ENCODE measurements at regions of chrX and their contacts with region 1.

Region 1: GRCh38 chrX:109384699-109385098 is 97.2 kb downstream of the GUCY2F start:
- DNase-seq: peak; percentile 28
- H3K4me3 Mint-ChIP-seq: no peak overlapping the region
- H3K27ac Mint-ChIP-seq: no peak overlapping the region
- H3K4me1 Mint-ChIP-seq: no peaks in the 10 kb centered on the region
- H3K27me3 Mint-ChIP-seq: peaks cover 13% of the 10 kb centered on the region
- CTCF ChIP-seq: peak; percentile 41

Region 2: DNA sequence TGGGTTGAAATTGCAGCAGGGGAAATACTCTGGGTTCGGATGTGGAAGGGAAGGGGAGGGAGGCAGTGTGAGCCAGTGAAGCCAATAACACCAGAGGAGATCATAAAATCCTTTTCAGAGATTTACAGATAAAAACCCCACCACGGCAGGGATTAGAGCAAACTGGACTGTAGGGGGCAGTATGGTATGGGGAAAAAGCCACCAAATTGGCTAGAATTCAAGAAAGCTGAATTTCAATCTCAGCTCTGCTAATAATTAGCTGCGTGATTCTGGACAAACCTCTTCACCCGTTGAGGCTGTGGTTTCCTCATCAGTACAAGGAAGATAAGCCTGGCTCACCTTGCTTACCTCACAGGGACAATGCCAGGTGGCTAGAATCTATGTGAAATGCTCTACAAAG is 1185.0 kb before region 1 on chrX:
- CTCF ChIA-PET with region 1: no interaction called
- intact Hi-C with region 1: loop called (anchors 10 kb)
- DNase-seq: peak; percentile 63
- H3K4me3 Mint-ChIP-seq: no peak overlapping the region
- H3K27ac Mint-ChIP-seq: no peak overlapping the region
- H3K4me1 Mint-ChIP-seq: no peaks in the 10 kb centered on the region
- H3K27me3 Mint-ChIP-seq: peaks cover 15% of the 10 kb centered on the region
- CTCF ChIP-seq: peak; percentile 29

Region 3: DNA sequence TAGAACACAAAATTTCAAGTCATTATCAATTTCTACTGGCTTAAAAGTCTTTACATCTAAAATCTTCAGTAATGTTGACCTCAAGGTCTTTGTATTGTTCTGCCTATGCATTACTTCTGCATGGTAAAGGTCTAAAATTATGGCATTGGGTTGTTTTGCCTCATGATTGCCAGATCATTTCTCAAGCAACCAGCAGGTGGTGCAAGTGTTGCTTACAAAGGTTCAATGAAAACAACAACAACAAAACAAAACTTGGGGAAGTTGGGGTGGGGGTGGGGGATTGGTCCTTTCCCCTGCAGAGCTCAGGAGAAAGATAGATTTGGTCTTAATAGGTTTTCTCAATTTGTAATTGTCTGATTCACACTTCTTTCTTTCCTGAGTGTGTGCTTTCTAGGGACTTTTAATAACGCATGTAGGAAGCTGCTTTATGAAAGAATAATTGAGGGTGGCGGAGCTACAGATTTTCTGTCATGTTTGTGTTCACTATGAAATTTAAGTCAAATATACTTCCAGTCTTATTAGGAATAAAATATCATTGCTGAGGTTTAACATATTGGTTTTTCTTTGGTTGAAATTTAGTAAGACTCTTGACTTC is 800.0 kb before region 1 on chrX:
- CTCF ChIA-PET with region 1: no interaction called
- intact Hi-C with region 1: loop called (anchors 10 kb)
- DNase-seq: peak; percentile 10
- H3K4me3 Mint-ChIP-seq: no peak overlapping the region
- H3K27ac Mint-ChIP-seq: no peak overlapping the region
- H3K4me1 Mint-ChIP-seq: no peaks in the 10 kb centered on the region
- H3K27me3 Mint-ChIP-seq: no peaks in the 10 kb centered on the region
- CTCF ChIP-seq: peak; percentile 34

Region 4: GRCh38 chrX:108699368-108699767 is 685.3 kb before region 1 on chrX:
- CTCF ChIA-PET with region 1: interaction called, 31 read pairs
- intact Hi-C with region 1: loop called (anchors 1 kb)
- DNase-seq: no peak
- H3K4me3 Mint-ChIP-seq: no peak overlapping the region
- H3K27ac Mint-ChIP-seq: no peak overlapping the region
- H3K4me1 Mint-ChIP-seq: no peaks in the 10 kb centered on the region
- H3K27me3 Mint-ChIP-seq: no peaks in the 10 kb centered on the region
- CTCF ChIP-seq: no peak

Region 5: GRCh38 chrX:109049902-109050301 is 334.8 kb before region 1 on chrX:
- CTCF ChIA-PET with region 1: no interaction called
- intact Hi-C with region 1: loop called (anchors 5 kb)
- DNase-seq: peak; percentile 6
- H3K4me3 Mint-ChIP-seq: no peak overlapping the region
- H3K27ac Mint-ChIP-seq: no peak overlapping the region
- H3K4me1 Mint-ChIP-seq: no peaks in the 10 kb centered on the region
- H3K27me3 Mint-ChIP-seq: no peaks in the 10 kb centered on the region
- CTCF ChIP-seq: no peak

Region 6: DNA sequence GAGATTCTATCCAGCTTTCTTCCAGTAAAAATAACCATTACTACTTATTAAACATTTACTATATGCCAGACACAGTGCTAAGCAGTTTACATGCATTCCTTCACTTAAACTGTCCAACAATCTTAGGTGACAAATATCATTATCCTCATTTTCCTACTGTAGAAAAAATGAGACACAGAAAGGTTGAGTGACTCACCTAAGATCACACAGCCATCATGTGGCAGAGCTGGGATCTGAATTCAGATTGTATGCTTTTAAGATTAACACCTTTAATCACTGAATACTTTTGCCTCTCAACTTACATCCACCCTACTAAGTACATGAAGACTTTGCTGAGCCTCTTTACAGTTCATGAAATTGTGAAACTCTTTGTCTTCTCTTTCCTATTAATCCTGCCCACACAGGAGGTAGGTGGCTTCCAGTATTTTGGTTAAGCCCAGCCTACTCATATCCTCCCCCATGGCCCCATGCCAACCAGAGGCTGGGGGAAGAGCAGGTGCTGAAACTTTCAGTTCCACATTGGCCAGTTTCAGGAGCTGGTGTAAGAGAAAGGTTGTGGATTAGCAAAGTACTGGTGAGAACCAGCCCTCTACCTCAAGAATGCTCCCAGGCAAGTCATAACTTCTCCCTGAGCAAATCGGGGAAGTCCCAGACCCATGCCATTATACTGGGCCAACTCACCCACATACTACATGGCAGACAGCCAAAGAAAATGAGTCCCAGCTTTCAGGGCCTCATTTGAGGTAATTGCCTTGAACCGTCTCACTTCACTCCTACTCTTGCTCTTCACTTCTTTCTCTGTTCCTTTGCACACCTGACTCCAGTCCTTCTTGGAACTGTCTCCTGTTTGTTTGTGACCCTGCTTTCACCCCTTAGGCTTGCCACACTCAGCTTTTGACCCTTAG is 113.9 kb before region 1 on chrX:
- CTCF ChIA-PET with region 1: no interaction called
- intact Hi-C with region 1: loop called (anchors 5 kb)
- DNase-seq: peak; percentile 83
- H3K4me3 Mint-ChIP-seq: no peak overlapping the region
- H3K27ac Mint-ChIP-seq: peak overlapping the region; percentile 80
- H3K4me1 Mint-ChIP-seq: peaks cover 47% of the 10 kb centered on the region
- H3K27me3 Mint-ChIP-seq: no peaks in the 10 kb centered on the region
- CTCF ChIP-seq: no peak

Region 7: GRCh38 chrX:109485470-109486340 is 101.0 kb after region 1 on chrX:
- CTCF ChIA-PET with region 1: no interaction called
- intact Hi-C with region 1: no loop called
- DNase-seq: peak; percentile 50
- H3K4me3 Mint-ChIP-seq: no peak overlapping the region
- H3K27ac Mint-ChIP-seq: no peak overlapping the region
- H3K4me1 Mint-ChIP-seq: no peaks in the 10 kb centered on the region
- H3K27me3 Mint-ChIP-seq: peaks cover 26% of the 10 kb centered on the region
- CTCF ChIP-seq: peak; percentile 81

Measured in Calu3 (cell line).